GM13976 (cell line): ENCODE measurements at regions of chr4 and their contacts with region 1.

Region 1: GRCh38 chr4:26885912-26886274 is 25.3 kb downstream of the STIM2 start:
- DNase-seq: peak; percentile 61
- CTCF ChIP-seq: no peak

Region 2: GRCh38 chr4:26342328-26343037 is 543.4 kb before region 1 on chr4:
- in situ Hi-C with region 1: no loop called
- DNase-seq: no peak
- CTCF ChIP-seq: no peak

Region 3: DNA sequence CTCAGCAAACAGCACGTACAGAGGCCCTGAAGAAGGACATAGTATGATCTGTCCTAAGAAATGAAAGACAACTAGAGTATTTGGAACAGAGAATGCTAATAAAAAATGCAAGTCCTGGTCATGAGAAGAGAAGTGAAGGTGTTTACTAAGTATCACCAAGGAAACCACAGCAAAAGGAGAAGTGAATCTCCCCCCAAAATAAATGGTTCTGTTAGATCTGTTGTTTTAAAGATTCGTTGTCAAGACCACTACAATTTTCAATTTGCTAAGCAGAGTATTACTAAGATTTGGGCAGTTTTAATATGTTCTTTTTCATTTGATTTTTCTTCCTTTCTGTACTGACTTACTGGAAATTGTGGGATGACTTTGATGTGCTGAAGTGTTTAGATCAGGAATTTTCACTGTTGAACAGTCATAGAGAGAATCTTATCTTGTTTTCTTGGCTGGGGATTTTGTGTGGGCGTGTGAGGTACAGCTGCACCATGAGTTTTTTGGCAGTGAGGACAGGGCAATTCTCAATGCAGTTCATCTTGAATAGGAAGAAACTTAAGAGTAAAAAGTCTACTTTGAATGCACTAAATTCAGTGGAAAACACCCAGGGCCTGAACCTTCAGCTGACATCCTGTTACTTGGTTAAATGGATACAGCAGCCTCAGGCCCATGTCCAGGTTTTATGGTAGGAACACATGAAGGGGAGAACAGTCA is 106.9 kb after region 1 on chr4:
- in situ Hi-C with region 1: loop called (anchors 10 kb)
- DNase-seq: peak; percentile 47
- CTCF ChIP-seq: no peak